ENCODE measurements at regions of chr17 and their contacts with region 1.

Region 1: DNA sequence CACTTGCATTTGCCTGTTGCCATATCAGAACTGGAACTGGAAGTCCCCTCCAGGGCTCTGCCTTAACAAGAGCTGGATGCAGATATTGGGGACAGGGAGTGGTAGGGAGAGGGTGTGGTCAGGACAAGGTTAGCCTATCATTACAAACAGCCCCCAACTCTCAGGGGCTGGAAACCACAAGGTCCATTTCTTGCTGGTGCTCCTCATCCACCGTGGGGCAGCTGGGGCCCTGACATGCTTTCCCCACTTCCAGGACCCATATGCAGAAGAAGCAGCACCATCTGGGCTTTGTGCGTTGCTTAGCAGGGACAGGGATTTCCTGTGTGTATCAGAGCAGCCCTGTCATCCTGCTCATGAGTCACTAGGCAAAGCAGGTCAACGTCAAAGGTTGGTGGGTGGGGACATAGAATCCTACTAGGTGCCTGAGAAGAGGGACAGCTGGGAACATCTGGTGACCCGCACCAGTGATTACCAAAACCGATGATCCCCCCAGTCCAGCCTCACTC is 26.9 kb downstream of the RGS9 start:
- DNase-seq: peak; percentile 51
- H3K4me3 Mint-ChIP-seq: no peak overlapping the region
- H3K27ac Mint-ChIP-seq: peak overlapping the region; percentile 67
- H3K4me1 Mint-ChIP-seq: peaks cover 25% of the 10 kb centered on the region
- H3K27me3 Mint-ChIP-seq: peaks cover 2% of the 10 kb centered on the region

Region 2: GRCh38 chr17:65013613-65014391 is 150.2 kb before region 1 on chr17:
- intact Hi-C with region 1: no loop called
- DNase-seq: peak; percentile 13
- H3K4me3 Mint-ChIP-seq: no peak overlapping the region
- H3K27ac Mint-ChIP-seq: peak overlapping the region; percentile 43
- H3K4me1 Mint-ChIP-seq: peaks cover 65% of the 10 kb centered on the region
- H3K27me3 Mint-ChIP-seq: no peaks in the 10 kb centered on the region

Region 3: DNA sequence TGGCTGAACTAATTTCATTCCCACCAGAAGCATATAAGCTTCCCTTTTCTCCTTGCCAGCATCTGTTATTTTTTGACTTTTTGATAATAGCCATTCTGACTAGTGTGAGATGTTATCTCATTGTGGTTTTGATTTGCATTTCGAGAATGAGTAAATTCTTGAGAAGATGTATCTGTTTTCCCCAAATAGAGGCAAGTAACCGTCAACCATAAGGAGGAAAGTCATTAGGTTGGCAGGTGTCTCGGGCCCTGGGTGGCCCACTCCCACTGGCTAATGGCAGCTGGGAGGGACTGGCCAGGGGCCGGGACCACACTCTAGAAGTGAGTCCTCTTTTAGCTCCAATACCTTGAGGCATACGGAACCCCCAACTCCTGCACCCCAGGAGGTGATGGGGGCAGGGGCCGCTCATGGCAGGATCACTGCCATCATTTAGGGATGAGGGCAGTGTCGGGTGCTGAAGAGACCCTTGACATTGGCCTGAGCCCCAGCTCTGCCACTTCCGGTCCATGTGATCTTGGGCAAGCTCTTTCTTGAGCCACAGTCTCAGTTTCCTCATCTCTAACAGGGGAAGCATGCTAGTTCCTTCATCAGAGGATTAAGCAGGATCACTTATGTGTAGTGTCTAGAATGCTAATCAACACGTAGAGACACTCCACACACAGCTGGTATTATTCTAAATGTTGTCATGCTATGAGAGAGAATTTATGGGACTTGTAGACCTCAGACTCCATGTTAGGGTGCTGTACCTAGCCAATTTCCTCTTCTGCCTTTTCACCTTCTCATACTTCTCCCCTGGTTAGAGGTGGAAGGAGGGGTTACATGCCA is 17.4 kb after region 1 on chr17:
- intact Hi-C with region 1: loop called (anchors 1 kb)
- DNase-seq: peak; percentile 32
- H3K4me3 Mint-ChIP-seq: peak overlapping the region; percentile 31
- H3K27ac Mint-ChIP-seq: peak overlapping the region; percentile 78
- H3K4me1 Mint-ChIP-seq: peaks cover 79% of the 10 kb centered on the region
- H3K27me3 Mint-ChIP-seq: peaks cover 11% of the 10 kb centered on the region

Region 4: DNA sequence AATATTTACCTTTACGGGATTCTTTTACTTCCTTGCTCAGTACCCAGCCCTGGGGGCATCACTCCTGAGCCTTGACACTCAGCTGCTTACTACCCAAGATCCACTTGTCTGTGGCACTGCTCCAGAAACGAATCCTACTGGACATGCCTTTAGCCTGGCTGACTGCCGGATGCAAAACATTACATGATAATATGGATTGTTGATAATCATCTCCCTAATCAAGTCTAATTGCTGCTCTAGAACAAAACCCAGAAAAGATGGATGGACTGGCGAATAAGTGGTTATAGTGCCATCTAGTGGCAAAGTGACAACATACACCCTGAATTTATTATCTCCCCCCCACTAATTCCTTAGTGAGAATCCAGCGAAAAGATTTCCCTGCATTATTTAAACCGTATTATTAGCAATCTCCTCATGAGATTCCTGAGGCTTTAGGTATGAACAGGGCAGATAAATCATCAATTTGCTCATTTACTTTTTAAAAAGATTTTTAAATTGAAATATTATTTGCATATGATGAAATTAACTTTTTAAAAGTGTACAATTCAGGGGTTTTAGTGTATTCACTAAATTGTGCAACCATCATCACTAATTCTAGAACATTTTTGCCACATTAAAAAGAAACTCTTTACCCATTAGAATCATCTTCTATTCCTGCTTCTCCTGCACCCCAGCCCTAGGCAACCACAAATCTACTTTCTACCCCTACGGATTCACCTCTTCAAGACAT is 34.8 kb after region 1 on chr17:
- intact Hi-C with region 1: loop called (anchors 5 kb)
- DNase-seq: no peak
- H3K4me3 Mint-ChIP-seq: no peak overlapping the region
- H3K27ac Mint-ChIP-seq: peak overlapping the region; percentile 9
- H3K4me1 Mint-ChIP-seq: peaks cover 14% of the 10 kb centered on the region
- H3K27me3 Mint-ChIP-seq: peaks cover 6% of the 10 kb centered on the region

Measured in activated T-helper 1 cell treated with anti-CD3 and anti-CD28 coated beads, Interleukin-12 subunit alpha, Interleukin-12 subunit beta, Interleukin-2, Interleukin-4 antibody, amounts not matched to agents 30 ng/mL and 10 ng/mL and 1 ng/mL, durations not matched to agents 14 hours and 24 hours and 36 hours (primary cell).